Stomach (tissue), 19 donors: ENCODE measurements at regions of chr6 and their contacts with region 1.

Region 1: DNA sequence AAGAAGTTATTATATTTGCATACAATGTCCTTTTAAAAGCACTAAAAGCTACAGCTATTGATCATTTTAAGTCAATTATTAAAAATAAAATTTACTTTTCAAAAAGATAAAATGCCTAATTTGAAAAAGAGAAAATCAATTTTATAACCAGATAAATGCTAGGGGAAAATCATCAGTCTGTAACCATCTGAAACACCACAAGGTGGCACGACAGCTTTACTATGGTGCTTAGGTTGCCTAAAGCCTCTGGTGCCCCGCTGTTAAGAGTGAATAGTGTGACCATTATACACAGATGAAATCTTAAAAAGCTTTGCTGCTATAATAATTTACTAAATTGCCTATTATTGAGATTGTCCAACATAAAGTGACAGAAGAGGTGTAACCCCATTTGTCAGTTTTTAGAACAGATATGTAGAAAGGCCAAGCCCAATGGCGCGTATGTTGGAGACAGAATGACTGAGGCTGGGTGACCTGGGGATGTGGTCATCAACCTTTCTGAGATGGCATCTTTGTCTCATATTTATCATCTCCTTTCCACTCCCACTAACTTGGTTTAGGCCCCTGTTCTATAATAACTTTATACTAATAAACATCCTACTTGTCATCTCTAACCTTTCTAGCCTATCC is 100.8 kb downstream of the MOXD1 start:
- DNase-seq: peak; percentile 45 to 77
- H3K4me3 ChIP-seq: no peak overlapping the region
- H3K27ac ChIP-seq: no peak overlapping the region
- H3K4me1 ChIP-seq: no peaks in the 10 kb centered on the region
- H3K27me3 ChIP-seq: no peaks in the 10 kb centered on the region
- CTCF ChIP-seq: peak in 4 of 7 experiments; percentile 28 to 60 (median 49)
- EP300 ChIP-seq: no peak
- POLR2A ChIP-seq: no peak

Region 2: GRCh38 chr6:132391391-132392271 is 91.2 kb after region 1 on chr6:
- intact Hi-C with region 1: loop called (anchors 10 kb)
- DNase-seq: peak in 1 of 2 donors; percentile 80
- H3K4me3 ChIP-seq: no peak overlapping the region
- H3K27ac ChIP-seq: peak overlapping the region in 4 of 5 donors; percentile 13 to 67 (median 38)
- H3K4me1 ChIP-seq: no peaks in the 10 kb centered on the region
- H3K27me3 ChIP-seq: no peaks in the 10 kb centered on the region
- CTCF ChIP-seq: no peak
- EP300 ChIP-seq: no peak
- POLR2A ChIP-seq: no peak

Region 3: GRCh38 chr6:132405143-132405915 is 104.9 kb after region 1 on chr6:
- intact Hi-C with region 1: no loop called
- DNase-seq: no peak
- H3K4me3 ChIP-seq: no peak overlapping the region
- H3K27ac ChIP-seq: no peak overlapping the region
- H3K4me1 ChIP-seq: peaks cover 9 to 16% (median 11%) of the 10 kb centered on the region in 4 donors
- H3K27me3 ChIP-seq: peaks cover 0 to 35% (median 18%) of the 10 kb centered on the region in 3 donors
- CTCF ChIP-seq: no peak
- EP300 ChIP-seq: no peak
- POLR2A ChIP-seq: no peak

Region 4: GRCh38 chr6:132483779-132484679 is 183.6 kb after region 1 on chr6:
- intact Hi-C with region 1: loop called (anchors 10 kb)
- DNase-seq: peak in 1 of 2 donors; percentile 87
- H3K4me3 ChIP-seq: no peak overlapping the region
- H3K27ac ChIP-seq: no peak overlapping the region
- H3K4me1 ChIP-seq: peaks cover 0 to 39% (median 21%) of the 10 kb centered on the region in 4 donors
- H3K27me3 ChIP-seq: no peaks in the 10 kb centered on the region
- CTCF ChIP-seq: peak in 5 of 7 experiments; percentile 15 to 77 (median 64)
- EP300 ChIP-seq: no peak
- POLR2A ChIP-seq: no peak